PC-9 (cell line): ENCODE measurements at regions of chr1 and their contacts with region 1.

Region 1: DNA sequence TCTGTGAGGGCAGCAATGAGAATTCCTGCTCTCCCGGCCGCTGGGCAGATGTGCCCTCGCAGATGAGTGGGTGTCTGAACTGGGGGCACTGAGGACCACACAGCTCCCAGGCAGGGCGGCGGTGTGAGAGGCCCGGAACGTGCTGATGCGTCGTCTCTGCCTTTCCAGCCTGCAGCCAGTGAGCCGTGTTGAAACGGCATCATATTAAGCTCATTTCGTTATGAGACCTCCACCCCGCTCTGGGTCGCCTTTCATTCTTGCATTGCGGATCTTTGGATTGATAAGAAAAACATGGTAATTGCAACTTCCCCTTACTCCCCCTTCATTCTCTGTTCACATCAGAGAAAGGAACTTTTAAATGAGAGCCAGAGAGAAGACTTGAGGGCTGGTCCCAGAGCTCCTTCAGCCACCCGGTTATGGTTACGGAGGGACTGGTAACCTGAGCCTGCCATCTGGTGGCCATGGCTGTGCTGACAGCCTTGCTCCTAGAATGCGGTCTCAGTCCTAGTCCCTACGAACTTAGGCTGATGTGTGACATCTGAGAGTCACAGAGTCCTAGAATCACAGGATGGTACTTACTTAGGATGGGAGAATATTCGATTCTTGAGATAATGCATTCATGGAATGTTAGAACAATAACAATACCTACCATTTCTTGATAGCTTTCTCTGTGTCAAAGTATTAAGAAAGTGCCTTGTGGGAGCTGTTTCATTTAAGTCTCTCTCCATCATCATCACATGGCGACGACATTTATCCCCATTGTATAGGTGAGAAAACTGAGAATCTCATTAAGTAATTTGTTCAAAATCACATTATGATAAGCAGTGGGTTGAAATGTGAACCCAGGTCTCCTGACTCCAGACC is 271.0 kb downstream of the TRABD2B start:
- DNase-seq: peak; percentile 58 to 64
- H3K4me3 ChIP-seq: no peak overlapping the region
- H3K27ac ChIP-seq: no peak overlapping the region
- H3K4me1 ChIP-seq: no peaks in the 10 kb centered on the region; the same call in 1 of the 2 replicates
- H3K27me3 ChIP-seq: no peaks in the 10 kb centered on the region; the same call in 1 of the 2 replicates
- CTCF ChIP-seq: peak; percentile 88

Region 2: GRCh38 chr1:47388891-47389238 is 337.4 kb before region 1 on chr1:
- CTCF ChIA-PET with region 1: interaction called, 18 read pairs
- POLR2A ChIA-PET with region 1: no interaction called
- intact Hi-C with region 1: loop called (anchors 1 kb)
- DNase-seq: peak; percentile 44 to 70
- H3K4me3 ChIP-seq: no peak overlapping the region
- H3K27ac ChIP-seq: no peak overlapping the region
- H3K4me1 ChIP-seq: peaks cover 9% of the 10 kb centered on the region; the same call in 1 of the 2 replicates
- H3K27me3 ChIP-seq: no peaks in the 10 kb centered on the region
- CTCF ChIP-seq: peak; percentile 88

Region 3: DNA sequence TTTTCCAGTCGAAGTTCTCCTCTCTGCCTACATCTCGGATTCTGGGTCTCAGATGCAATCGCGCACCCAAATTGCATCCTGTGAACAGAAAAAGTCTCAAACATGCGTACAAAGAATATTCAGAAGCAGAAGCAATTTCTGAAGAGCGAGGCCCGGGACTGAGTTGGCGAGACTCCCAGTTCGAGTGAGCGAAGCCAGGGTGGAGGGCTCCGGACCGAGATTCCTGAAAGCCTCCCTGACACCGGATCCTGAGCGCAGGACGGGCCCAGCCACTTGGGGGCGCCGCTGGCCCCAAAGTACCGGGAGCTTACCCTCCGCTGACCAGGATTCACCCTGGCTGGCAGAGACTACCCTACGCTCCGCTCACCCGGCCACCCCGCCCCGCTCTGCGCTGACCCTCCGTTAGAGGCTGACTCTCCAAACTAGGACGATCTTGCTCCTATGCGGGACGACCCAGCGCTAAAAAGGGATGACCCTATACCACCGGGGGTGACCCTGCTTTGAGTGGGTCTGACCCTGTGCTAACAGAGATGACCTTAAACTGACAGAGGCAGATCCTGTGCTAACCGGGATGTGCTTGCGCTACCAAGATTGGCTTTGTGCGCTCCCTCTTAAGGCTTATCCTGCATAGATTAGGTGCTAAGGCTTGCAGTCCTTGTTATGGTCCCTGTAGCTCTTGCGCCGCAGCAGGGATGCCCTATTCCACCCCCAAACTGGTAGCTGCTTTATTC is 276.2 kb before region 1 on chr1:
- CTCF ChIA-PET with region 1: no interaction called
- POLR2A ChIA-PET with region 1: no interaction called
- intact Hi-C with region 1: loop called (anchors 5 kb)
- DNase-seq: no peak
- H3K4me3 ChIP-seq: no peak overlapping the region
- H3K27ac ChIP-seq: no peak overlapping the region
- H3K4me1 ChIP-seq: no peaks in the 10 kb centered on the region
- H3K27me3 ChIP-seq: no peaks in the 10 kb centered on the region
- CTCF ChIP-seq: peak; percentile 58

Region 4: GRCh38 chr1:47527658-47528255 is 198.5 kb before region 1 on chr1:
- CTCF ChIA-PET with region 1: interaction called, 3 read pairs
- POLR2A ChIA-PET with region 1: no interaction called
- intact Hi-C with region 1: loop called (anchors 1 kb)
- DNase-seq: peak in 1 of 2 experiments; percentile 16
- H3K4me3 ChIP-seq: no peak overlapping the region
- H3K27ac ChIP-seq: no peak overlapping the region
- H3K4me1 ChIP-seq: no peaks in the 10 kb centered on the region
- H3K27me3 ChIP-seq: no peaks in the 10 kb centered on the region
- CTCF ChIP-seq: peak; percentile 74

Region 5: GRCh38 chr1:47675047-47675675 is 51.1 kb before region 1 on chr1:
- CTCF ChIA-PET with region 1: no interaction called
- POLR2A ChIA-PET with region 1: no interaction called
- intact Hi-C with region 1: no loop called
- DNase-seq: no peak
- H3K4me3 ChIP-seq: no peak overlapping the region
- H3K27ac ChIP-seq: no peak overlapping the region
- H3K4me1 ChIP-seq: no peaks in the 10 kb centered on the region
- H3K27me3 ChIP-seq: no peaks in the 10 kb centered on the region
- CTCF ChIP-seq: no peak